ENCODE measurements at regions of chr10 and their contacts with region 1.

Region 1: DNA sequence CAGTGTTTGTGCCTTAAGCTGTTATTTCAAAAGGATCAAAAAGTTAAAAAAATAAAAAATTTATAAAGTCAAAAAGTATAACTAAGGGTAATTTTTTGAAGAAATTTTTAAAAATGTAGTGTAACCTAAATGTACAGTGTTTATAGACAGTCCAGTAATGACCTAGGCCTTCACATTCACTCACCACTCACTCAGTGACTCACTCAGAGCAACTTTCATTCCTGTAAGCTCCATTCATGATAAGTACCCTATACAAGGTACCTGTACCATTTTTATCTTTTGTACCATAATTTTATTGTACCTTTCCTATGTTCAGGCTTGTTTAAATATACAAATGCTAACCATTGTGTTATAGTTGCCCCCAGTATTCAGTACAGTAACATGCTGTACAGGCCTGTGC is 21.5 kb downstream of the DNAJC9 start:
- H3K4me3 Mint-ChIP-seq: no peak overlapping the region
- H3K27ac Mint-ChIP-seq: no peak overlapping the region
- H3K4me1 Mint-ChIP-seq: peaks cover 29% of the 10 kb centered on the region
- H3K27me3 Mint-ChIP-seq: no peaks in the 10 kb centered on the region

Region 2: DNA sequence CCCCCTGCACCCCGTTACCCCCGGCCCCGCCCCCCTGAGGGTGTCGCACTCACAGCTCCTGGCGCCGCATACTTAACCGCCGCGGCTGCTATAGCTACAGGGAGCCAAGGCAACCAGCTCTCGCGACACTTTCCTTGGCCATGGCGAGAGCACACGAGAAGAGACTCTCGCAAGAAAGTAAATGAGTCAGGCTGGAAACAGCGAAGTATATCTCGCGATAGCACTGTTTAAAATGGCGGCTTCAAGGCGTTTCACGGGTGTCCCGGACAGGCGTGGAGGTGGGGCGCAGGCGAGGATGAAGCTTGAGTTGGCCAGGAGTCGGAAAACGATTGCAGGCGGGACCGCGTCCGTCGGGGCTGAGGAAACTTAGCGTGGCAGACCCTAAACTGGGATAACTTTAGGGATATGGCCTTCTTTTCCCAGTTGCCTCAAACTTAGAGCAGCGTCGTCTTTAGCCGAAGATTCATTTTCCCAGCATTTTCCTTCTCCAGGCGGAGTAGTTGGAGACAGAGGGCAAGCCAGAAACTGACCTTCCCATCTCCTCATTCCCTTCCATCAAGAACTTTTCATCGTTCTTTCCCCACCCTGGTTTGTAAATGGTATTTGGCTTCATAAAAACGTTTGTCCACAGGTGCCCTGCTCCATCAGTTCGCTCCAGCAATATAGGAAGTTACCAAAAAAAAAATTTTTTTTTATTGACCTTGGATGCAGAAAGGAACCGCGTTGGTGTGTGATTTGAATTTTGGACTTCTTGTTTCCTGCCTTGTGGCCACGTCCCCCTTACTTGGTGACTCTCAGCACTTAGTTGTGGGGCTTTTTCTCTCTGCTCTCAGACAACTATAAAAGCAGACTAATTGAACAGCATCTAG is 400.6 kb after region 1 on chr10:
- intact Hi-C with region 1: loop called (anchors 10 kb)
- H3K4me3 Mint-ChIP-seq: peak overlapping the region; percentile 98
- H3K27ac Mint-ChIP-seq: peak overlapping the region; percentile 97
- H3K4me1 Mint-ChIP-seq: peaks cover 21% of the 10 kb centered on the region
- H3K27me3 Mint-ChIP-seq: no peaks in the 10 kb centered on the region